ENCODE measurements at regions of chr5 and their contacts with region 1.

Region 1: GRCh38 chr5:159412284-159413046 is 82.2 kb upstream of the IL12B start:
- DNase-seq: peak; percentile 49 to 94 (median 65)
- ATAC-seq: peak; percentile 90
- H3K4me3 ChIP-seq: no peak overlapping the region
- H3K4me3 Mint-ChIP-seq: peak overlapping the region; percentile 9
- H3K27ac ChIP-seq: peak overlapping the region; percentile 13 to 47
- H3K27ac Mint-ChIP-seq: peak overlapping the region; percentile 68
- H3K4me1 ChIP-seq: peaks cover 26% of the 10 kb centered on the region
- H3K4me1 Mint-ChIP-seq: peaks cover 40% of the 10 kb centered on the region
- H3K27me3 ChIP-seq: no peaks in the 10 kb centered on the region
- H3K27me3 Mint-ChIP-seq: no peaks in the 10 kb centered on the region
- CTCF ChIP-seq: no peak

Region 2: DNA sequence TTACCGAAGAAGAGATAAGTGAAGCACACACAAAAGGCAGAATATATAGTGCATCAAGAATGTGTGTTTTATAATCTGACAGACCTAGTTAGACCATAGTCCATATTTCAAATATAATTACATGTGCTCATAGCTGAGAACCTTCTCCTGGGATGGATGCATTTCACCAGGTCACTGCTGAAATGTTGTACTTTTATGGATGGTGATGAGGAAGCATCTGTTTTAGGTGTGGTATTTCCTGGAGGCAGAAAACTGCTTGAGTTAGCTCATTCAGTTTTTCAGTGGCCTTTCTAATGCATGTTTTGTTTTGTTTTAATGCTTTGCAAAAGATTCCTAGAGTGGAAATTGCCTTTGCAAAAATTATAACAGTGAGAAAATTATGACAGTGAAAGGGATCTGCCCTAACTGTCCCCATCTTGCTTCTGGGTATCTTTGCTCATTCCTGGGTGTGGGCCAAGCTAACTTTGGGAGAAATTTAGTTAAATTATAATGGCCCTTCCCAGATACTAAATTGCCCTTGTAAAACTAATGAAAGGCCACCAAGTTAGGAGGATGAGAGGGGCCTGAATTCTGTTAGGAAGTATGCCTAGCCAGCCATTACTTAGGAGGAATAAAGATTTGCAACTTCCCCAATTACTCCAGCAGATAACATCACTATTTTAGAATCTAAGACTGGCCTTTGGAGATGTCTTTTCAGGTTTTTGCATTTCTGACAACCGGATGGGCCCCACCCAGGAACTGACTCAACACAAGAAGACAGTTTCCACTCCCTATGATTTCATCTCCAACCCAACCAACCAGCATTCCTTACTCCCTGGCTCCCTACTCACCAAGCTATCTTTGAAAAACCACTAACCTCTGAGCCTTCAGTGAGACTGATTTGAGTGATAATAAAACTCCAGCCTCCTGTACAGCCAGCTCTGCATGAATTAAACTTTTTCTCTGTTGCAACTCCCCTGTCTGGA is 75.2 kb before region 1 on chr5:
- CTCF ChIA-PET with region 1: interaction called, 7 read pairs
- POLR2A ChIA-PET with region 1: interaction called, 9 read pairs
- intact Hi-C with region 1: loop called (anchors 1 to 5 kb)
- DNase-seq: peak in 5 of 9 experiments; percentile 35 to 67 (median 39)
- ATAC-seq: peak; percentile 59
- H3K4me3 ChIP-seq: no peak overlapping the region
- H3K4me3 Mint-ChIP-seq: no peak overlapping the region
- H3K27ac ChIP-seq: peak overlapping the region in 1 of 2 experiments; percentile 43
- H3K27ac Mint-ChIP-seq: peak overlapping the region; percentile 58
- H3K4me1 ChIP-seq: peaks cover 29% of the 10 kb centered on the region
- H3K4me1 Mint-ChIP-seq: peaks cover 46% of the 10 kb centered on the region
- H3K27me3 ChIP-seq: no peaks in the 10 kb centered on the region
- H3K27me3 Mint-ChIP-seq: no peaks in the 10 kb centered on the region
- CTCF ChIP-seq: no peak

Region 3: GRCh38 chr5:159427180-159428012 is 14.9 kb after region 1 on chr5:
- CTCF ChIA-PET with region 1: interaction called, 4 read pairs
- POLR2A ChIA-PET with region 1: interaction called, 4 read pairs
- intact Hi-C with region 1: loop called in 1 of 2 experiments (anchors 2 kb)
- DNase-seq: peak in 2 of 9 experiments; percentile 27 to 64
- ATAC-seq: peak; percentile 55
- H3K4me3 ChIP-seq: no peak overlapping the region
- H3K4me3 Mint-ChIP-seq: peak overlapping the region; percentile 24
- H3K27ac ChIP-seq: peak overlapping the region in 1 of 2 experiments; percentile 59
- H3K27ac Mint-ChIP-seq: peak overlapping the region; percentile 75
- H3K4me1 ChIP-seq: peaks cover 15% of the 10 kb centered on the region
- H3K4me1 Mint-ChIP-seq: peaks cover 30% of the 10 kb centered on the region
- H3K27me3 ChIP-seq: no peaks in the 10 kb centered on the region
- H3K27me3 Mint-ChIP-seq: no peaks in the 10 kb centered on the region
- CTCF ChIP-seq: no peak

Measured in CD8-positive, alpha-beta T cell (primary cell).